SK-N-SH (cell line): ENCODE measurements at regions of chr19 and their contacts with region 1.

Region 1: GRCh38 chr19:5038631-5039271 is 69.8 kb downstream of the KDM4B start:
- DNase-seq: peak; percentile 72
- H3K4me3 ChIP-seq: no peak overlapping the region
- H3K27ac ChIP-seq: peak overlapping the region in 1 of 2 experiments; percentile 90; a peak in 2 of 4 replicates
- H3K4me1 ChIP-seq: peaks cover 23 to 42% of the 10 kb centered on the region in 2 experiments
- H3K27me3 ChIP-seq: no peaks in the 10 kb centered on the region
- CTCF ChIP-seq: peak; percentile 56
- EP300 ChIP-seq: no peak
- RAD21 ChIP-seq: peak; percentile 15; the same call in 1 of the 2 replicates

Region 2: DNA sequence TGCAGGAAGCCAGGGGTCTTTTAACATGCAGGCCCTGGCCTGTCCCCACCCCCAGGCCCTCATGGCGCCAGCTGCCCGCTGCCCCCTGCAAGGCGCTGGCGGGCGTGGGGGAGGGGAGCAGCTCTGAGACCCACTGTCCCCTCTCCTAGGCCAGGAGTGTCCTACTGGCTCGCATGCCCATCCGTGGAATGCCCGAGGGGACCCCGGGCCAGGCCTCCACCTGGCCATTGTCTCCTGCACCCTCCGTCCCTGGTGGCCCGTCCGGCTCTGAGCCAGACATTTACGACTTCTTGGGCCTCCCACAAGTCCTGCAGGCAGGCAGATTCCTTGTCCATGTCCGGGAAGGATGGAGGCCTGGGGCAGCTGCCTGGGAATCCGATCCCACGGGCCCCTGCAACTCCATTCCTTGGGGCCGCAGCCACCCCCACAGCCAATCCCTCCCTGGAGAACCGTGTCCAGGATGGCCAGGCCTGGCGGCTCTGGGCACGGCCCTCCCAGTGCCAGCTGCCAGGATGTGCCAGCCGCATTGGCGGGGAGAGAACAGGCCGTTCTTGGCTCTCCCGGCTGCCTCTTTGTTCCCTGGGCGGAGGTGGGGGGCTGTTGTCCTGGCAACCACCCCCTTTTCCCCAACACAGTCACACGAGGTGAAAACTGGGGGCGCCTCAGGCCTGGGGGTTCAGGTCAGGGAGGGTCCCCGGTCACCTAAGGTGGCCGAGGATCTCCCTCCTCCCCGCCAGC is 160.8 kb before region 1 on chr19:
- CTCF ChIA-PET with region 1: interaction called, 12 read pairs
- POLR2A ChIA-PET with region 1: no interaction called
- DNase-seq: peak; percentile 57
- H3K4me3 ChIP-seq: no peak overlapping the region
- H3K27ac ChIP-seq: no peak overlapping the region
- H3K4me1 ChIP-seq: no peaks in the 10 kb centered on the region; a peak in 1 of 4 replicates
- H3K27me3 ChIP-seq: no peaks in the 10 kb centered on the region
- CTCF ChIP-seq: no peak
- EP300 ChIP-seq: no peak
- RAD21 ChIP-seq: no peak

Region 3: DNA sequence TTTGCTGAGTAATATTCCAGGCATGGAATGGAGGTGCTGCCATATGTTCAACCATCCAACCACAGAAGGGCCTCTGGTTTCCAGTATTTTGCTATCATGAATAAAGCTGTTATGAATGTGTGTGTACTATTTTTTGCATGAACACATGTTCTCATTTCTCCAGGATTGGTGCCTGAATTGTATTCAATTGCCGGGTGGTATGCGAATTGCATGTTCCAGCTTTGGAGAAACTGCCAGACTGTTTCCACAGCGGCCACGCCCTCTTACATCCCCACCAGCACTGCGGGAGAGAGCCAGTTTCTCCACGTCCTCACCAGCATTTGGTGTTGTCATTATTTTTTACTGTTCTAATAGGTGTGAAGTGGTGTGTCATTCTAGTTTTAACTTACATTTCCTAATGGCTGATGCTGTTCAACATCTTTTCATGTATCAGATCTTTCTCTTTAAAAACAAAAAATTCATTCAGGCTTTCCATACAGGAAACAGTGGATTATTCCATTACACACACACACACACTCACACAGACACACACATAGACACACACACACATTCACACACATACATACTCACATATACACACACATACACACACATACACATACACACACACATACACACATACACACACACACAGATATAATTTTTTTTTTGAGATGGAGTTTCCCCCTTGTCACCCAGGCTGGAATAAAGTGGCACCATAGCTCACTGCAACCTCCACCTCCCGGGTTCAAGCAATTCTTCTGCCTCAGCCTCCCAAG is 147.7 kb after region 1 on chr19:
- CTCF ChIA-PET with region 1: no interaction called
- POLR2A ChIA-PET with region 1: no interaction called
- DNase-seq: no peak
- H3K4me3 ChIP-seq: no peak overlapping the region
- H3K27ac ChIP-seq: no peak overlapping the region
- H3K4me1 ChIP-seq: peaks cover 0 to 7% of the 10 kb centered on the region in 2 experiments; a peak in 1 of 4 replicates
- H3K27me3 ChIP-seq: no peaks in the 10 kb centered on the region
- CTCF ChIP-seq: no peak
- EP300 ChIP-seq: no peak
- RAD21 ChIP-seq: no peak